Dorsolateral prefrontal cortex (tissue), 120 donors: ENCODE measurements at regions of chr5 and their contacts with region 1.

Region 1: DNA sequence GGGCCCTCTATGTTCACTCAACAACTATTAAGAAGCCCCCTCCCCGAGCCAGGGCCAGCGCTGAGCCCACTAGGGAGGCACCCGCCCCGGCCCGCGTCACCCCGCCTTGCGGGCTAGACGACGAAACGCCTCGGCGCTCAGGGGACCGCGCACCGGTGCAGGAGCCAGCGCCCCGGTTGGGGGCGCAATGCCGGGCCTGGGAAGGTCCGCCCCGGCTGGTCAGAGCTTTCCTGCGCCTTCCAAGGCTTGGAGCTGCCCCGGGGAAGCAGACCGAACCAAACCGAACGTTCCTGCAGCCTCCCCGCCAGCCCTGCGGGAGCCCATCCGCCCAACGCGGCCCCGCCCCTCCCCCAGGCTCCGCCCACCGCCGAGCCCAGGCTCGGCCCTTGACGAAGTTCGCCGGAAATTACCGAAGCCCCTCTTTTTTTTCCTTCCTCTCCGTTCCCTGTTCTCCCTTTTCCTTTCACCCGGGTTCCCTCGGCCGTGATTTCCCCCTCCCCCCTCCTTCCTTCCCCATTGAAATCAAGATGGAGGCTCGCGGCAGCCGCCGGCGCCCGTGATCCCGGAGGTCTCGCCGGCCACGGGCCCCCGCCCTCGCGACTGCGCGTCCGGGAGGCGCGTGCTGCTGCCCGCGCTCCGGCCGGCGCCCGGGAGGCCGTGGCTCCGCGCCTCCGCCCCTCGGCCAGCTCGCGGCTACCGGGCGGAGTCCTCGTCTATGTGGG is at the start of gene TRIO:
- DNase-seq: peak; percentile 77 to 92 (median 88)
- H3K4me3 ChIP-seq: peak within 1 kb of the TSS; percentile 67 to 94 (median 84)
- H3K27ac ChIP-seq: peak within 1 kb of the TSS; percentile 42 to 98 (median 92)
- H3K27me3 ChIP-seq: no peaks in the 10 kb centered on the region
- CTCF ChIP-seq: peak in 55 of 56 donors; percentile 19 to 75 (median 55)
- total RNA-seq, gene TRIO: 171 to 414 (median 292) TPM

Region 2: DNA sequence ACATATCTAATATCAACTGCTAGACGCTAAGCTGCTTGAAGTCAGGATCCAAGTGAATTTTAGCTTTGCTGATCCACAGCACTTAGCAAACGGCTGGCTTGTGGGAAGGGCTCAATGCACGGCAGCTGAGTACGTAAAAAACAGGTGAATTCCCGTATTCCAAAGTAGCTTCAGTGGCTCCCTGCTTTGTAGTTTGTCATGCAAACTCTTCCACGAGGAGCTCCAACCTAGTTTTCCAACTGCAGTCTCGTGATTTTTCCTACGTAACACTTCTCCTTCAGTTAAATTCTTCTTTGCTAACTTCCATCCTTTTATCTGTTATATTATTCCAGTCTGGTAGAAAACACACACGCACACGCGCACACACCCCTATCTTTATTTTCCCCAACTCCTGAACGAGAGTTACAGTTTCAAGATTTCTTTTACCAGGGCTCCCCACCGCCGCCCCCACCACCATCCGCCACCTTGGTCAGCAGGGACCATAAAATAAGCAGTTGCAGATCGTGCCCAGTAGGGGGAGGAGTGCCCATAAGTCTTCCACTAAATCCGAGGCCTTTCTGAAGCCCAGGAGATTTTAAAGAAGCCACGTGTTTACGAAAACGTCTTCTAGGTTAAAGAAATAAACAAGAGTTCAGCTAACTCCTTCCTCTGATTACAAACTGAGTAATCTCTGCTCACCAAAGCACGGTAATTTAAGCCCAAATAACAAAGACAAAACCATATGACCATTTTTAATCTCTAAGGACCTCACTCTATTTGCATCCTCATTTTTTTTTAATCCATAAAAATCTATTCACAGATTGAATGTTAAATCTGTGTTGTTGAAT is 34.6 kb before region 1 on chr5:
- intact Hi-C with region 1: loop called in 1 of 2 experiments (anchors 5 kb)
- DNase-seq: peak in 6 of 10 donors; percentile 31 to 49 (median 45)
- H3K4me3 ChIP-seq: peak overlapping the region in 27 of 59 donors; percentile 3 to 49 (median 30)
- H3K27ac ChIP-seq: no peak overlapping the region
- H3K27me3 ChIP-seq: peaks cover 0 to 5% (median 0%) of the 10 kb centered on the region in 45 donors
- CTCF ChIP-seq: peak; percentile 51 to 80 (median 70)

Region 3: DNA sequence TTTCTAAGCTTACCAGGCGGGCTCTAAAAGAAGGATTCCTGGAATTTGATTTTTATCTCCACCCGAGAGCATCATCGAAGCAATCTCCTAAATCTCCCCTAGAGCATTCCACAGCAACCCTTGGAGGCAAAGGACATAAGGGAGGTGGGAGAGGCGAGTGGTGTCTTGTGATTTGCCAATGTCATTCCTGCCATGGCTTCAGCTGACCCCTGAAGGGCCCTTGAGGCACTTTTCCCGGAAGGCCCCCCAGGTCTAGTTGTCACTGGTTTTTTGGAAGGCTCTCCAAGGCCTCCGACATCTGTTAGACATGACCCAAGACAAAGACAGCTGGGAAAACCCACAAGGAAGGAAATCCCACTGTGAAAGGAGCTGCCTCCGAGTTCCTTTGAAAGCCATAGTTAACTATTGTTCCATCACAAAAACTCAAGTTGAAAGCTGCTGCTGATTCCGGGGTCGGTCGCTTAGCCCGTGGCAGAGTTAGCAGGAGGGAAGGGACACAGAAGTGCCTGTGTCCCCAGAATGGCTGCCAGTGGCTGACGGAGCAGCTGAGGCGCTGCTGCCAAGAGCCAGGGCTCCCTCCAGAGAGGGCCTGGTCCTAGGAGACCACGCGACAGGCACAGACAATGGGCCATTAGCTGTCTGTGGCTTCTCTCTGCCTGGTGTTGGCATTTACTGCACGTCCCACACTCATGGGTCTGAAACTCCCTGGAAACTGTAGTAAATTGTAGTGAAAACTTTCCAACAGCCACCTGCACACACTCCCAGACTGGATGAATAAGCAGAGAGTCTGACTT is 24.3 kb before region 1 on chr5:
- intact Hi-C with region 1: loop called in 1 of 2 experiments (anchors 2 kb)
- DNase-seq: peak; percentile 30 to 91 (median 90)
- H3K4me3 ChIP-seq: peak overlapping the region in 24 of 59 donors; percentile 1 to 47 (median 18)
- H3K27ac ChIP-seq: peak overlapping the region in 48 of 59 donors; percentile 1 to 88 (median 65)
- H3K27me3 ChIP-seq: no peaks in the 10 kb centered on the region
- CTCF ChIP-seq: peak in 21 of 56 donors; percentile 6 to 52 (median 15)

Region 4: DNA sequence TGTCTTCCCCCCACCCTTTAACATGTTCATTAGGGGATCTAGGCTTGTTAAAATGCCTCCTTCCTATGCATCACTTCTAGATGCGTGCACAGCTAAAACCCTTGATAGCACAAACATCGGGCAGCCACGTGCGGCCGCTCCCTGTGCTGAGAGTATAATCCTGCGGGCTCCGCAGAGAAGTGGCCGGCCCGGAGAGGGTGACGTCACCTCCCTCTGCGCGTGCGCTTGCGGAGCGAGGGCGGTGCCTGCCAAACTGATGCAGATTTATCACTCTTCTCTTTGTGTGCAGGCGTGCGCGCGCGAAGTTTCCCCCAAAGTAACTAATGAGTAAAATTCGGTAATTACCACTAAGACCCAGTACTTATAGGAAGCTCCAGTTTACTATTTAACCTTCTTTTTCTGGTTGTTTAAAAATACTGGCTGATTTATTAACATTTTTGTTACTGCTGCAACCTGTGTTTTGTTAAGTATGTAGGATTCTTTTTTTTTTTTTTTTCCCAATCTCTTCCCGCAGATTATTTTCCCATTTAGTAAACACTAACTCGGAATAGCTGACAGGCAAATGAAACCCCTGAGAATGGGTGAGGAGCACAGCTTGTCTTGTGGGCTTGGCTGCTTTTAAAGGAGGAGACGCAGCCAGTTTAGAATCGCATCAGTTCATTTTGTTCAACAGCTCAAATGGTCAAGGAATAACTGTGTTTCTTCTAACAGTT is 121.8 kb after region 1 on chr5:
- intact Hi-C with region 1: loop called (anchors 1 to 5 kb)
- DNase-seq: peak; percentile 84 to 94 (median 92)
- H3K4me3 ChIP-seq: peak overlapping the region in 58 of 59 donors; percentile 1 to 64 (median 46)
- H3K27ac ChIP-seq: peak overlapping the region in 25 of 59 donors; percentile 4 to 80 (median 26)
- H3K27me3 ChIP-seq: peaks cover 0 to 4% (median 0%) of the 10 kb centered on the region in 45 donors
- CTCF ChIP-seq: peak in 19 of 56 donors; percentile 1 to 48 (median 28)

Region 5: GRCh38 chr5:14270209-14270702 is 127.3 kb after region 1 on chr5:
- intact Hi-C with region 1: loop called in 1 of 2 experiments (anchors 2 kb)
- DNase-seq: peak in 1 of 10 donors; percentile 63
- H3K4me3 ChIP-seq: no peak overlapping the region
- H3K27ac ChIP-seq: peak overlapping the region in 36 of 59 donors; percentile 1 to 73 (median 46)
- H3K27me3 ChIP-seq: peaks cover 0 to 4% (median 0%) of the 10 kb centered on the region in 45 donors
- CTCF ChIP-seq: peak; percentile 68 to 89 (median 82)

Region 6: DNA sequence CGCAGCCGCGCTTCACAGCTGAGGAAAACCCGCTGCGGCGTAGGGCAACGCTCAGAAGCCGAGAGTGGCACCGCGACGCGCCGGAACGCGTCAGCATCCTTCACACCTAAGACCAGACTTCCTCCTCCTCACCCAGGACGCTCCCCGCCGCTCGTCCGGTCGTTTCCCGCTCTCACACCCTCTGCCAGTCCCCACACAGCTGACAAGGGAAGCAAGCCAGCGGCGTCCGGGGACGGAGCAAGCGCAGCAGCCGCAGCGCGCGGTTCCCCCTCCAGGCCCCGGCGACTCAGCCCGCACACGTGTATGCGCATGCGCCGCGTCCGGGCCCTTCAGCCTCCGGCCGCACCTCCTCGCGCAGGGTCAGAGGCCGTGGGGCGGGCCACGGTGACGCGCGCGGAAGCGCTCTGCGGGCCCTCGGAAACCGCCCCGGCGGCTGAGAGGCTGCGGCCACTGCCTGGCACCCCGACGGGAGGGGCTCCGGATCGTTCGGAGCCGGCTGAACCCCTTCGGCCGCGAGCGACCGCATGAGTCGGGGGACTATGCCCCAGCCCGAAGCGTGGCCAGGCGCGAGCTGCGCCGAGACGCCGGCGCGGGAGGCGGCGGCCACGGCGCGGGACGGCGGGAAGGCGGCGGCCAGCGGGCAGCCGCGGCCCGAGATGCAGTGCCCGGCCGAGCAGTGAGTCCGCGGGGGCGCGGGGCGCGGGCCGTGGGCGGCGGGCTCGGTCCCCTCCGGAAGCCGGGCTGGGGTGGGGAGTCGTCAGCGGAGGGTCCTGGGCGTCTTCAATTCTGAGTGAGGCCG is 521.5 kb after region 1 on chr5 and contains the start of gene OTULIN:
- intact Hi-C with region 1: loop called in 1 of 2 experiments (anchors 10 kb)
- DNase-seq: peak; percentile 78 to 95 (median 86)
- H3K4me3 ChIP-seq: peak within 1 kb of the TSS; percentile 46 to 97 (median 81)
- H3K27ac ChIP-seq: peak within 1 kb of the TSS; percentile 43 to 97 (median 91)
- H3K27me3 ChIP-seq: no peaks in the 10 kb centered on the region
- CTCF ChIP-seq: peak in 28 of 56 donors; percentile 3 to 53 (median 25)
- total RNA-seq, gene OTULIN: 14.9 to 36.1 (median 22.3) TPM